ENCODE measurements at regions of chr1 and their contacts with region 1.

Region 1: DNA sequence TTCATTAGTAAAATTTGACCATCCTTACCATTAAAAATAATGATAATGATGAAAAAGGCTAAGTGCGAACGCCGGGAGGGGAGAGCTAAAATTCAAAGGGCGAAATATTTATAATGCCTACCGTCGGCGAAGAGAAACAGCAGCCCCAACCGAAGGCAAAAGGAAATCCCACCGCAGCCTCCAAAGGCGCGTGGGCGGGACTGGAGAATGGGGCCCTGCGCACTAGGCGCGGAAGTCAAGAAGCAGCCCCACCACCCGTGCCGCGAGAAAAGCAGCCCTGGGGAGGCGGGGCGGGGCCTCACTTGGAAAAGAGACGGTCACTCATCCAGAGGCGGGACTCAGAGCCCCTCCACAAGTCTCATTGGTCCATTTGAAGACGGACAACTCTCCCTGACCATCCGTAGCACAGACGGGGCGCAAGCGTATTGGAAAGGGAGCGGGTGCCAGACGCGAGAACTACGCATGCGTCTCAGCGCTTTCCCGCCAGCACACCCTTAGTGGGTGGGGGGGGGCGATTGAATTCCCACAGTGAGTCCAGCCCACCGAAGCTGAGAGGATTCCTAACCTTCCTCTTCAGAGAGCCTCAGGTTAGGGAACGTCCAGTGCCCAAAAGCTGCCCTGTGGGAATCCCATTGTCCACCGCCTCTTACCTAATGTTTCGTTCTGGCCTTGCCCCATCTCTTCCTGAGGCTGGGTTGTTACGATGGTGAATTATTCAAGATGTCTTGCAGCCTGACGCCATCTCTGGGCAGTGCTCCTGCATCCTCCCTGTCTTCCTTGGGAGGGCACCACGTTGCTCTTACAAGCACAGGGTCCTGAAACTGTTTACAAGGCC is 19.0 kb downstream of the MTX1 start:
- DNase-seq: peak; percentile 98 to 99 (median 99)
- ATAC-seq: peak; percentile 98
- H3K4me3 ChIP-seq: peak overlapping the region; percentile 68
- H3K27ac ChIP-seq: peak overlapping the region; percentile 82
- H3K4me1 ChIP-seq: no peaks in the 10 kb centered on the region
- H3K27me3 ChIP-seq: no peaks in the 10 kb centered on the region

Region 2: DNA sequence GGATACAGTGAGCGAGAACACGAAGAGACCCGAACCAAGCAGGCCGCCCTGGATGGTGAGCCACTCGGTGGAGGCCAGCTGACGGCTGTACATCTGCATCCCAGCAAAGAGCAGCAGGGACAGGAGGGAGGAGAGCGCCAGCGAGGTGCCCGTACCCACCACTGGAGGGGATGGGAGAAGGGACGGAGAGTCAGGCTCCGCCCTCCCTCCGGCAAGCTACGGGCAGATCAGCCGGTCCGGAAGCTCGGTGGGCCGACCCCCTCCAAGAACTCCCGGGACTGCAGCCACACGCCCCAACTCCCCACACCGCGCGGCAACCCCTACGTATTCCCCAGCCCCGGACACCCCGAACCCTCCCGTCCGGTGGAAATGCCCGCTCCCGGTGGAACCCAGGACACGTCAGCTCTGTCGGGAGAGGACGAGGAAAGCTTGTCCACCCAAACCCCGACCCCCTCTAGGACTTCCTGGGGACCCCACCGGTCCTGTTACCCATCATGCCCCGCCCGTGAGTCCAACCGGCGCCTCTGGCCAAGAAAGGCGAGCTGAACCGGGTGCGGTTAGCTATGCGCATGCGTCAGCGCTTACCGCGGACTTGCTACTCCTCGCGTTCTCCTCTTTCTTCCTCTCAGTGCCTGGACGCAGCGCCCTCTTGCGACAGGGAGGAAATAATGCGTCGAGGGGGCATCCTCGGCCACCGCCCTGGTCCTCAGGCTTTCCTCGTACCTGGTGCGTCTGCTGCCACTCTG is 54.6 kb before region 1 on chr1 and contains the start of gene KRTCAP2:
- intact Hi-C with region 1: loop called in 2 of 4 experiments (anchors 10 kb)
- DNase-seq: peak; percentile 97 to 98 (median 98)
- ATAC-seq: peak; percentile 86 to 87
- H3K4me3 ChIP-seq: peak within 1 kb of the TSS; percentile 79
- H3K27ac ChIP-seq: peak within 1 kb of the TSS; percentile 86
- H3K4me1 ChIP-seq: no peaks in the 10 kb centered on the region
- H3K27me3 ChIP-seq: no peaks in the 10 kb centered on the region
- total RNA-seq, gene KRTCAP2: 122 to 150 (median 130) TPM

Region 3: DNA sequence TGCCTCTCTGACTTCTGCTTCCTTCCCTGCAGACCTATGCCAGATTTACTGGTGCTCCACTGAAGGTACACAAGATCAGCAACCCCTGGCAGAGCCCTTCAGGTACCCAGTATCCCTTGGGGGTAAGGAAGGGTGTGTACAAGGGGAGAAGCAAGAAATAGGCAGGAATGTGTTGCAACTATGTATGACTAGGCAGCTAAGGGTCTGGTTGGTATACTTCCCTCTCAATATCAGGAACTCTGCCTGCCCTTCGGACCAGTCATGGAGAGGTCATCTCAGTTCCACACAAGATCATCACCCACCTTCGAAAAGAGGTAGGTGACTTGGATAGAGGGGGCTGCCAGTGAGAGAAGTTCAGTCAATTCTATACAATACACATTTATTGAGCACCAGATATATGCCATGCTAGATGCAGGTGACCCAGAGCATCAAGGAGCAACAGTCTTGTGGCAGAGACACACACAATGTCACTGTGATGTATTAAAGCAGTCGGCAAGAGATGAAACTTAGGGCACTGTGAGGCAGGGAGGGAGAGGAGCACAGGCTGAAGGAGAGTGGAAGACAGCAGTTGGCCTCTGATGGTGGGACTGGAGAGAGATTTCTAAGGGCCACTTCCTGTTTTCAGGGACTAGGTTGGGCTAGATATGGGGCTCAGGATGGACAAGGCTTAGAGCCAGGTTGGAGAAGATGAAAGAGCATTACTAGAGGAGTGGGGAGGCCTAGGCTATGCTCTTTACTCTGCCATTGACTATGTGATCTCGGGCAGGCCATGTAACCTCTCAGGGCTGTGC is 17.0 kb before region 1 on chr1:
- intact Hi-C with region 1: loop called in 1 of 4 experiments (anchors 2 kb)
- DNase-seq: no peak
- ATAC-seq: no peak
- H3K4me3 ChIP-seq: no peak overlapping the region
- H3K27ac ChIP-seq: peak overlapping the region; percentile 31
- H3K4me1 ChIP-seq: peaks cover 5% of the 10 kb centered on the region
- H3K27me3 ChIP-seq: no peaks in the 10 kb centered on the region

Region 4: DNA sequence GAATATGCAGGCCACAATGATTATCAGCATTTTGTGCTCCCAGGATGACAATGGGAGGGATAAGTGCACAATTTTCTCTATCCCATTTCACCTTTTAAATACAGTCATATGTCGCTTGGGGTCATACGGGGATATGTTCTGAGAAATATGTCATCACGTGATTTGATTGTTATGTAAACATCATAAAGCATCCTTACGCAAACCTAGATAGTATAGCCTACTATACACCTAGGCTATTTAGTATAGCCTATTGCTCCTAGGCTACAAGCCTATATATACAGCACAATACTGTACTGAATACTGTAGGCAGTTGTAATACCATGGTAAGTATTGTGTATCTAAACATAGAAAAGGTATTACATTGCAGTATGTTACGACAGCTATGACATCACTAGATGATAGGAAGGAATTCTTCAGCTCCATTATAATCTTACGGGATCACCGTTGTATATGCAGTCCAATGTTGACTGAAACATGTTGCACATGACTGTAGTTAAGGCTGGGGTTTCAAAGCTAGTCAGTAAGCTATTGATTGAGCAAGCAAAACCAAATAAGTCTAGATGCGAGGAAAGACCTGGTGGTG is 112.1 kb after region 1 on chr1:
- intact Hi-C with region 1: no loop called
- DNase-seq: no peak
- ATAC-seq: no peak
- H3K4me3 ChIP-seq: no peak overlapping the region
- H3K27ac ChIP-seq: no peak overlapping the region
- H3K4me1 ChIP-seq: no peaks in the 10 kb centered on the region
- H3K27me3 ChIP-seq: no peaks in the 10 kb centered on the region